SK-N-SH (cell line): ENCODE measurements at regions of chr9 and their contacts with region 1.

Region 1: GRCh38 chr9:113275157-113276131 is at the starts of genes CDC26 and PRPF4:
- DNase-seq: peak; percentile 93
- H3K4me3 ChIP-seq: peak within 1 kb of the TSS; percentile 80 to 95
- H3K27ac ChIP-seq: peak within 1 kb of the TSS; percentile 90
- H3K4me1 ChIP-seq: peaks cover 7 to 12% of the 10 kb centered on the region in 2 experiments; a peak in 3 of 4 replicates
- H3K27me3 ChIP-seq: no peaks in the 10 kb centered on the region
- CTCF ChIP-seq: no peak
- EP300 ChIP-seq: no peak
- RAD21 ChIP-seq: no peak
- polyA plus RNA-seq, gene CDC26: 29.6 and 31.0 TPM in 2 replicates
- polyA plus RNA-seq, gene PRPF4: 22.5 and 23.2 TPM in 2 replicates

Region 2: DNA sequence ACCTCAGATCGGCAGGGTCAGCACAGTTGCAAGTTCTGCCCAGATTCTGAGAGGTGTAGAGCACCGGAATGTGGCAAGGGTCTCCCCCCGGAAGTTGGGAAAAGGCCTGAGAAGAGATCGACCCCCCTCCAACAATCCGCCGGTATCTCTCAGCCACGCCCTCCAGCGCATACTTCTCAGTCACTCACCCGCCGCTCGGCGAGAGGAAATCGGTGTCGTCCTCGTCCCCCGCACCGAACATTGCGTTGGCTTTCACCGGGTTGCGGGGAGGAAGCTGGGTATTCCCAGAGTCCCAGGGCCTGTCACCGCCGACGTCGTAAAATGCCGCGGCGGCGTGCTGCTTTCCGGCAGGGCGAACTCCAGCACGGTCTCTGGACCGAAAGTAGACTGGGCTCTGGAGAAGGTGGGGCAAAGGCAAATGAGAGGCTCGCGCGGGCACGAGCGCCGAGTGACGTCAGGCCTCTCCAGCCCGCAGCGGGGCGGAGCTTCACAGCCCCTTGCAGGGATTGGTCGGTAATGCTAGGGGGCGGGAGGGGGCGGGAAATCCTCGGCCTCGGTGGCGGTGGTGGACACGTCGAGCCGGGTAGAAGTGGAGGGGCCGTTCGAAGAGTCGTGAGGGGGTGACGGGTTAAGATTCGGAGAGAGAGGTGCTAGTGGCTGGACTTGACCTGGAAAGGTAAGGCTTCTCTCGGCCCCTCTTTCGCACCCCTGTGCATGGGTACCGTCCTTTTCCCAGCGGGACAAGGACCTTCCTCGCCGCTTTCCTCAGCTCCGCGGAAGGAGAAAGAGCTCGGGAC is 54.2 kb before region 1 on chr9 and contains the starts of genes FKBP15 and SLC31A1:
- CTCF ChIA-PET with region 1: interaction called, 19 read pairs
- POLR2A ChIA-PET with region 1: interaction called, 19 read pairs
- DNase-seq: peak; percentile 96
- H3K4me3 ChIP-seq: peak within 1 kb of the TSS; percentile 96 to 98
- H3K27ac ChIP-seq: peak within 1 kb of the TSS; percentile 70 to 80
- H3K4me1 ChIP-seq: peaks cover 16 to 17% of the 10 kb centered on the region in 2 experiments
- H3K27me3 ChIP-seq: no peaks in the 10 kb centered on the region
- CTCF ChIP-seq: no peak
- EP300 ChIP-seq: no peak
- RAD21 ChIP-seq: 0 out of 2 replicates have a peak, but pooled peaks have one; percentile 4
- polyA plus RNA-seq, gene FKBP15: 13.9 and 17.6 TPM in 2 replicates
- polyA plus RNA-seq, gene SLC31A1: 7.7 and 11.2 TPM in 2 replicates

Region 3: DNA sequence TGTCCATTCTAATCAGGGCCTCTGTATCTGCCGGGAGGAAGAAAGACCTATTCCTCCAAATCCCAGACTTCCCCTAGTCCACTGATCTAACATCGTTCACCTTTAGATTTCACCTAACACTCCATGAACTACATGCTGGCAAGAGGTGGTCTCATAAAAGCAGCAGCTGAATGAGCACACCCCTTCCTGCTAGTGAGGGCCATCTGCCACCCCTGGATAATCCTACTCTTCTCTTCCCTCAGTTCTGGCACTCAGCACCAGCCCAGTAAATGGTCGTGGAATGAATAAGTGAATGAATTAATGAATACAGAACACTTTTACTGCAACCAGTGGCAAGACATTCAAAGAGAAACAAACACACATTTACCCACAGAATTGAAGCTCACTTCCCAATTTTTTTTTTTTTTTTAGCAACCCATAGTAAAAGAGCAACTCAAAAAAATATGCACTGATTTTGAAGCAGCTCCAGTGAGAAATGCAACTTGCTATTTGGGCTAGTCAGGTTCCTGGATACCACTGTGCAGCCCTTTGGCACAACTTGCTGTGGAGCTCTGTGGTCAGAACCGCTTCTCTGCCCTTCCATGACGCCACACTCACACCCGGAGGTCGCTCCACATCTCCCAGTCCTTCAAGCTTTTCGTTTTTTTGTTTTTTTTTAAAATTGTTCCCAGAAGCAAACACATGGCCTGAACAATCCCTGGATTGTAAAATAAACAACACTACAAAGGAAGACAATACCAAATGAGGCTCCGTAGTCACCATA is 21.5 kb after region 1 on chr9:
- CTCF ChIA-PET with region 1: interaction called, 10 read pairs
- POLR2A ChIA-PET with region 1: interaction called, 3 read pairs
- DNase-seq: no peak
- H3K4me3 ChIP-seq: no peak overlapping the region
- H3K27ac ChIP-seq: no peak overlapping the region
- H3K4me1 ChIP-seq: no peaks in the 10 kb centered on the region
- H3K27me3 ChIP-seq: no peaks in the 10 kb centered on the region
- CTCF ChIP-seq: no peak
- EP300 ChIP-seq: no peak
- RAD21 ChIP-seq: no peak

Region 4: GRCh38 chr9:113401027-113401792 is 125.8 kb after region 1 on chr9 and contains the start of gene ALAD:
- CTCF ChIA-PET with region 1: interaction called, 42 read pairs
- POLR2A ChIA-PET with region 1: interaction called, 6 read pairs
- DNase-seq: peak; percentile 100
- H3K4me3 ChIP-seq: peak within 1 kb of the TSS; percentile 85 to 98
- H3K27ac ChIP-seq: peak within 1 kb of the TSS; percentile 46 to 62; a peak in 3 of 4 replicates
- H3K4me1 ChIP-seq: peaks cover 8 to 10% of the 10 kb centered on the region in 2 experiments; a peak in 1 of 4 replicates
- H3K27me3 ChIP-seq: no peaks in the 10 kb centered on the region
- CTCF ChIP-seq: peak; percentile 93
- EP300 ChIP-seq: no peak
- RAD21 ChIP-seq: peak; percentile 69
- polyA plus RNA-seq, gene ALAD: 10.7 and 11.8 TPM in 2 replicates

Region 5: DNA sequence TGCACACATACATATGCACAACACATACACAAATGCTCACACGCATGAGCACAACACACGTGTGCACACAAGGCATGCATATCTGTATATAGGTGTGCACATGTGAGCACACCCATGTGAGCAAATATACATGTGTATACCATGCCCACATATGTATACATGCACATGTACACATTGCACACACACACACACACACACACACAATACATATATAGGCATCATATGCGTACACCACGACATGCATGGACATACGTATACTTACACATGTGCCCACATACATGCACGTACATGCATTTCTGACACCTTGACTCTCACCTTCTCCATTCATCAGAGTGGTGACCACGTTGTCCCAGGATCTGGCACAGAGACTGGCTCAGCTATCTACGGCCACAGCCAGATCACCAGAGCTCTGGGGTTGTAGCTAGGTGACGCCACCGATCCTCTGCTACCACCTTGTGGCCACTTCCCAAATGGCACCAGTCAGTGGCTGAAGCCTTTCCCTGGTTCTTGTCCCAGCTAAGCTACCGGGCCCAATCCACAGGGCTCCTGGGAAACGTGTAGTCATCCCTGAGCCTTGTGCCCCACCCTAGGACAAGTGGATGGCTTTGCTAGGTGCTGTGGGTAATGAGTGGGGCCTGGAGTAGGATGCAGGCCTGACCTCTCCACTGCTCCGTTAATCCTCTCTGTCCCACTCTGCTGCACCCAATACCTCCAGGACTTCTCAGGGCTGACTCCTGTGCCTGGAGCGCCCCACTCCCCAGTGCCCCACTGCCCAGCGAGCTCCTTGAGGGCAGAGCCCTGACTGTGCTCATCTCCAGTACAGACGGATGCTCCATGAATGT is 382.5 kb after region 1 on chr9:
- CTCF ChIA-PET with region 1: interaction called, 10 read pairs
- POLR2A ChIA-PET with region 1: no interaction called
- DNase-seq: peak; percentile 83
- H3K4me3 ChIP-seq: no peak overlapping the region; a peak in 1 of 4 replicates
- H3K27ac ChIP-seq: no peak overlapping the region
- H3K4me1 ChIP-seq: peaks cover 11 to 15% of the 10 kb centered on the region in 2 experiments; a peak in 2 of 4 replicates
- H3K27me3 ChIP-seq: no peaks in the 10 kb centered on the region
- CTCF ChIP-seq: peak; percentile 90
- EP300 ChIP-seq: no peak
- RAD21 ChIP-seq: peak; percentile 99